ENCODE measurements at regions of chr10 and their contacts with region 1.

Region 1: DNA sequence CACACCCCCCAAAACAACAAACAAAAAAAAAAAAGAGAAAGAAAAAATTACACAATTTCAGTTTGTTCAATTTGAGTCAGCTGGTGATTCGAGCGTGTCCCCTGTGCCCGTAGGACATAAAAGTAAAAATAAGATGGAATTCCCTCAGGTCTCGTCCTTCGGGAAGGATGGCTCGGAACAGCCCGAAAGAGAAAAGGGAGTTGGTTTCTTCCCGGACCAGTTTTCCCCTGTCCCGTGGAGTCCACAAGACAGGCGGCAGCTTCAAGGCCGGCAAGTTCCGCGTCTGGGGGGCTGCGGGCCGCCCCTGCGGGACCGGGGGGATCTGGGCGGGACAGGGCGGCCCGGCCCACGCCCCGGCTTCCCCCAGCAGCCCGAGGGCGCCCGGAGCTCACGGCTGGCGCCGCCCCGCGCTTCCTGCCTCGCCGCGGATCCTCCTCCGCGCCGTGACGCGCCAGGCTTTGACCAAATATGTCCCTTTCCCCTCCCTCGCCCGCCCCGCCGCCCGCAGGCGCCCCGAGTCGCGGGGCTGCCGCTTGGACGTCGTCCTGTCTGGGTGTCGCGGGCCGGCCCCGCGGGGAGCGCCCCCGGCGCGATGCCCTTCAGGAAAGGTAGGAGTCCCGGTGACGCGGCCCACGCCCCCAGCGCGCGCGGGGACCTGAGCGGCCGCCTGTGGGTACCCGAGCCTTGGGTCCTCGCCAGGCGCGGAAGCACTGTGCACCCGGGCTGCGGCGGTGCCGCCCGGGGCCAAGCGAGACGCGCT is 55.8 kb downstream of the RBM17 start:
- DNase-seq: peak; percentile 94
- H3K4me3 ChIP-seq: peak overlapping the region; percentile 76 to 92
- H3K27ac ChIP-seq: peak overlapping the region; percentile 81 to 87
- H3K4me1 ChIP-seq: peaks cover 21% of the 10 kb centered on the region
- H3K27me3 ChIP-seq: no peaks in the 10 kb centered on the region
- CTCF ChIP-seq: peak in 1 of 3 experiments; percentile 6
- POLR2A ChIP-seq: no peak

Region 2: GRCh38 chr10:5943536-5943935 is 201.1 kb before region 1 on chr10:
- intact Hi-C with region 1: no loop called
- DNase-seq: no peak
- H3K4me3 ChIP-seq: no peak overlapping the region
- H3K27ac ChIP-seq: peak overlapping the region; percentile 70 to 80
- H3K4me1 ChIP-seq: peaks cover 14% of the 10 kb centered on the region
- H3K27me3 ChIP-seq: no peaks in the 10 kb centered on the region
- CTCF ChIP-seq: no peak
- POLR2A ChIP-seq: no peak

Region 3: GRCh38 chr10:6108603-6109443 is 35.8 kb before region 1 on chr10:
- intact Hi-C with region 1: loop called (anchors 5 kb)
- DNase-seq: no peak
- H3K4me3 ChIP-seq: no peak overlapping the region
- H3K27ac ChIP-seq: no peak overlapping the region
- H3K4me1 ChIP-seq: no peaks in the 10 kb centered on the region
- H3K27me3 ChIP-seq: no peaks in the 10 kb centered on the region
- CTCF ChIP-seq: peak; percentile 71 to 79 (median 79)
- POLR2A ChIP-seq: no peak

Measured in testis (tissue), 5 donors.